ENCODE measurements at regions of chr1 and their contacts with region 1.

Region 1: GRCh38 chr1:14113841-14114567 is 414.0 kb downstream of the PRDM2 start:
- DNase-seq: peak; percentile 33
- H3K4me3 ChIP-seq: no peak overlapping the region
- H3K27ac ChIP-seq: no peak overlapping the region
- H3K4me1 ChIP-seq: no peaks in the 10 kb centered on the region
- H3K27me3 ChIP-seq: peaks cover 4% of the 10 kb centered on the region
- CTCF ChIP-seq: peak in 3 of 4 experiments; percentile 31 to 60 (median 59)
- POLR2A ChIP-seq: no peak

Region 2: DNA sequence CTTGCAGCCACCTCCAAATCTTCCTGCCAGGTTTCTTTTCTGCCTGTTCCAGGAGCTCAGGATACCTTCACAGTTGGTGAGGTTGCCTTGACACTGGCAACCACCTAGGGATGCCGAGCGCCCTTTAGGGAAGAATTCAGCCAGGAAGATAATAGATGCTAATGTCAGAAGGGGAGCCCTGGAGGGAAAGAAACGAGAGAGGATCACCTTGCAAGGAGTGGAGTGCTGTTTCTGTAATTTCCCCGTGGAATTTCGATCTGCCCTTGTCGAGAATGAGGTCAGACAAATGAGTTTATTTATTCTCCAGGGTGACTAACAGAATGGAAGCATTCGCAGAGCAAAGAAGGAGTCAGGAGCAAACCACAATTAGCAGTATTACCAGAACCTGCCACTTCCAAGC is 168.7 kb after region 1 on chr1:
- intact Hi-C with region 1: no loop called
- DNase-seq: no peak
- H3K4me3 ChIP-seq: no peak overlapping the region
- H3K27ac ChIP-seq: no peak overlapping the region
- H3K4me1 ChIP-seq: no peaks in the 10 kb centered on the region
- H3K27me3 ChIP-seq: no peaks in the 10 kb centered on the region
- CTCF ChIP-seq: no peak
- POLR2A ChIP-seq: no peak

Region 3: DNA sequence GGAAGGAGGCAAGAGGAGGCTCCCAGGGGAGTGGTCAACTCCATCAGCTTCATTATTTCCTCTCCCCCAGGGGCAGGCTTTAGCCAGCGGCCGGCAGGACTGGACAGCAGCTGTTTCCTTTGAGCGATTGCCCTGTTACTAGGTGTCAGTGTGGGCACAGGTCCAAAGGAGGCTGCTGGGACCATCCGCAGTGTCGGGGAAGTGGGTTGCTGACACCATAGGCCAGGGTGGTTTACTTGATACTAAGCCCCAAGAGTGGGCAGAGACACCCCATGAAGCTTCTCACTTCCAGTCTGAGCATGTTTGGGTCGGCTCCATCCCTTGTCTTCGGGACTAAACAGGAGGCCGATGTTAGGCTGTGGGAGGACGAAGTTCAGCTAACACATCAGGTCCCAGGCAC is 548.1 kb after region 1 on chr1:
- intact Hi-C with region 1: no loop called
- DNase-seq: no peak
- H3K4me3 ChIP-seq: no peak overlapping the region
- H3K27ac ChIP-seq: no peak overlapping the region
- H3K4me1 ChIP-seq: no peaks in the 10 kb centered on the region
- H3K27me3 ChIP-seq: no peaks in the 10 kb centered on the region
- CTCF ChIP-seq: no peak
- POLR2A ChIP-seq: no peak

Region 4: GRCh38 chr1:14738225-14738624 is 624.2 kb after region 1 on chr1:
- intact Hi-C with region 1: loop called (anchors 5 kb)
- DNase-seq: peak; percentile 66
- H3K4me3 ChIP-seq: no peak overlapping the region
- H3K27ac ChIP-seq: no peak overlapping the region
- H3K4me1 ChIP-seq: peaks cover 10% of the 10 kb centered on the region
- H3K27me3 ChIP-seq: peaks cover 4% of the 10 kb centered on the region
- CTCF ChIP-seq: no peak
- POLR2A ChIP-seq: no peak

Region 5: DNA sequence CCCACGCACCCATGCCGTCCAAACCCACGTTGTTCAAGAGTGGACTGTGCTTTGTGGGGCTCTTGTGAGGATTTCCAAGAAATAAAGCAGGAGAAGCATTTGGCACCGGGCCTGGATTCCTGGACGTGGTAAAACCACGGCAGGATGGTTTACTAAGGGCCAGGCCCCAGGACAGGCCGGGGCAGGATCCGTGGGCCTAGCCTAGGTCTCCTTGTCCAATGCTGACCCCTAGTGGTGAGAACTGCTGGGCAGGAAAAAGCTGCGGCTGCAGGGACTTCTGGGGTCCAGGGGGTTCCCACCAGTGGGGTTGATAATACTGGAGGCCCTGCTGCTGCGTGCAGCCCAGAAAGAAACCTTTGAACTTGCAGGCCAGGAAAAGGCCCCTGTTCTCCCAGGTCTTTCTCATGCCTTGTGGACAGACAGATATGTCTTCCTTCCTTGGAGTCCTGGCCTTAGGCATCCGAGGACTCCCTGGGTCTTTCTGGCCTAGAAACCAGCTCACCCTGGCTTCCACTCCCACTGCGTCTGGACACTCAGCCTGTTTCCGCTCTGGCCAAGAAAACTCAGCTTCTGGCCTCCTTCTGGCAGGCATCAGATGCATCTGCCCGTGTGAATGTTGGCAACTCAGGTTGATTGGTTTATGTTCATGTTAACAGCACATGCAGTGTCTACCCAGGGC is 932.6 kb after region 1 on chr1:
- intact Hi-C with region 1: loop called (anchors 5 kb)
- DNase-seq: peak; percentile 65
- H3K4me3 ChIP-seq: no peak overlapping the region
- H3K27ac ChIP-seq: no peak overlapping the region
- H3K4me1 ChIP-seq: no peaks in the 10 kb centered on the region
- H3K27me3 ChIP-seq: no peaks in the 10 kb centered on the region
- CTCF ChIP-seq: peak; percentile 67 to 92 (median 90)
- POLR2A ChIP-seq: no peak

Measured in prostate gland (tissue), 2 donors.